ENCODE measurements at regions of chr2 and their contacts with region 1.

Region 1: DNA sequence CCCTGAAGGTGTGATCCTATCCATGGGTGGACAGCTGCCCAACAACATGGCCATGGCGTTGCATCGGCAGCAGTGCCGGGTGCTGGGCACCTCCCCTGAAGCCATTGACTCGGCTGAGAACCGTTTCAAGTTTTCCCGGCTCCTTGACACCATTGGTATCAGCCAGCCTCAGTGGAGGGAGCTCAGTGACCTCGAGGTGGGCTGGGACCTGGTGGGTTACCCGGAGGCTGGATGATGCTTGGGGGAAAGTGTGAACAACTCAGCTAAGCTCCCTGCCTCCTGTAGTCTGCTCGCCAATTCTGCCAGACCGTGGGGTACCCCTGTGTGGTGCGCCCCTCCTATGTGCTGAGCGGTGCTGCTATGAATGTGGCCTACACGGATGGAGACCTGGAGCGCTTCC is 16.2 kb downstream of the CAD start:
- DNase-seq: no peak
- ATAC-seq: no peak
- H3K4me3 ChIP-seq: no peak overlapping the region
- H3K27ac ChIP-seq: no peak overlapping the region
- H3K4me1 ChIP-seq: no peaks in the 10 kb centered on the region
- H3K27me3 ChIP-seq: no peaks in the 10 kb centered on the region
- CTCF ChIP-seq: no peak
- EP300 ChIP-seq: no peak
- POLR2A ChIP-seq: no peak
- RAD21 ChIP-seq: no peak

Region 2: DNA sequence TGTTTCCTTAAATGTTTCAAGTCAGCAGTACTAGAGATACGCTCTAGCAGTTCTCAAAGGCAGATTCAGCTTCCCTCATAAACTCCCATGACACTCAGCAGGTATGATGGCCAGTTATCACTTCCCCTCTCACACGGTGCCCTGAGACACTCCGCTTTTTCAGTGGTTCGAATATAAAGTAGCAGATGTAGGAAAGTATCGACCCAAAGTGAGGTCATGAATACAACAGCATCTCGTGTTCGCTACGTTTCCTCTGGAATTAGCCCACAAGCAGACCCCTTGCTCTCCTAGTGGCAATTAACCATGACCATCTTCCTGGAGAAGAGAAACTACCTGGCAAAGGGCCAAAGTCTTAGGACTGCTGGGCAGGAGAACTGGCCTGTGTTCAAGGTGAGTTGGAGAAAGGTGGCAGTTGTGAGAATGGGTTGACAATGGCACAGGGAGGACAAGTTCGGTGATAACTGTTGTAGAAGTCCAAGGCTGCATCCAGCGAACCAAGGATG is 191.1 kb before region 1 on chr2:
- CTCF ChIA-PET with region 1: no interaction called
- POLR2A ChIA-PET with region 1: no interaction called
- in situ Hi-C with region 1: no loop called
- intact Hi-C with region 1: no loop called
- DNase-seq: no peak
- ATAC-seq: 0 out of 3 replicates have a peak, but pooled peaks have one; percentile 8
- H3K4me3 ChIP-seq: no peak overlapping the region
- H3K27ac ChIP-seq: no peak overlapping the region
- H3K4me1 ChIP-seq: no peaks in the 10 kb centered on the region
- H3K27me3 ChIP-seq: no peaks in the 10 kb centered on the region
- CTCF ChIP-seq: no peak
- EP300 ChIP-seq: no peak
- POLR2A ChIP-seq: peak; percentile 58; the same call in 1 of the 2 replicates
- RAD21 ChIP-seq: no peak

Region 3: DNA sequence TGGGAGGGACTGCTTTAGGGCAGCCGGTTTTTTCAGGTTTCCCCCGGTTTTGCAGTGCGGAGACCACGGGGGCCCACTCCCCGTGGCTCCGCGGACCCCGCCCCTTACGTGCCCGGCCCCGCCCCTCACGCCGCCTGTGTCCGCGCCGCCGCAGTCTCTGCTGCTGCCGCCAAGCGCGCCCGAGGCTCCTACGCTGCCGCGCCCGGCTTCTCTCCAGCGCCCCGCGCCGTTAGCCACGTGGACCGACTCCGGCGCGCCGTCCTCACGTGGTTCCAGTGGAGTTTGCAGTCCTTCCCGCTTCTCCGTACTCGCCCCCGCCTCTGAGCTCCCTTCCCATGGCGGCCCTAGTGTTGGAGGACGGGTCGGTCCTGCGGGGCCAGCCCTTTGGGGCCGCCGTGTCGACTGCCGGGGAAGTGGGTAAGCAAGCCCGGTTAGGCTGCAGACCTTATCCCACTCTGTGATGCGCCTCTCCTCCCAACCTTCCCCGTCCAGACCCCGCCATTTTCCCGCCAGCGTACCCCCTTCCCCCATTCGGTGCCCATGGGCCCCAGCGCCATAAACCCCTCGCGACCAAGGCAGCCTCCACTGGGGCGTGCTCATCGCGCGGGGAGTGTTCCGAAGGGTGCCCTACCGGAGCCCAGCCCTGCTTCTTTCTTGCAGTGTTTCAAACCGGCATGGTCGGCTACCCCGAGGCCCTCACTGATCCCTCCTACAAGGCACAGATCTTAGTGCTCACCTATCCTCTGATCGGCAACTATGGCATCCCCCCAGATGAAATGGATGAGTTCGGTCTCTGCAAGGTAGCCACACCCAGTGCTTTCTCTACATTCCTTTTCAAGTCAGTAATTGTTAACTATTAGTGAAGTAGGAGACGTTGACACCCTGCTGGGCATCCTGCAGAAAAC is 15.9 kb before region 1 on chr2 and contains the start of gene CAD:
- CTCF ChIA-PET with region 1: no interaction called
- POLR2A ChIA-PET with region 1: interaction called, 12 read pairs
- in situ Hi-C with region 1: no loop called
- intact Hi-C with region 1: no loop called
- DNase-seq: peak; percentile 89 to 94 (median 92)
- ATAC-seq: peak; percentile 94
- H3K4me3 ChIP-seq: peak within 1 kb of the TSS; percentile 65
- H3K27ac ChIP-seq: peak within 1 kb of the TSS; percentile 91
- H3K4me1 ChIP-seq: peaks cover 19 to 25% of the 10 kb centered on the region in 2 experiments
- H3K27me3 ChIP-seq: no peaks in the 10 kb centered on the region
- CTCF ChIP-seq: peak; percentile 11 to 62 (median 43); a peak in 4 of 6 replicates
- EP300 ChIP-seq: no peak; the same call in 1 of the 2 replicates
- POLR2A ChIP-seq: peak; percentile 87
- RAD21 ChIP-seq: no peak
- polyA plus RNA-seq, gene CAD: 7.5 to 8.8 TPM

Measured in K562 (cell line).